ENCODE measurements at regions of chr12 and their contacts with region 1.

Region 1: GRCh38 chr12:2691006-2691344 is 103.8 kb upstream of the FKBP4 start:
- DNase-seq: peak; percentile 43 to 79 (median 64)
- H3K4me3 ChIP-seq: peak overlapping the region; percentile 63
- H3K4me3 Mint-ChIP-seq: peak overlapping the region; percentile 89 to 98 (median 94)
- H3K27ac ChIP-seq: peak overlapping the region; percentile 65
- H3K27ac Mint-ChIP-seq: peak overlapping the region; percentile 86 to 99 (median 94)
- H3K4me1 ChIP-seq: peaks cover 26% of the 10 kb centered on the region
- H3K4me1 Mint-ChIP-seq: peaks cover 42 to 55% (median 52%) of the 10 kb centered on the region in 3 donors
- H3K27me3 ChIP-seq: no peaks in the 10 kb centered on the region
- H3K27me3 Mint-ChIP-seq: peaks cover 7 to 10% of the 10 kb centered on the region in 2 donors

Region 2: GRCh38 chr12:2719392-2719791 is 28.4 kb after region 1 on chr12:
- CTCF ChIA-PET with region 1: no interaction called
- POLR2A ChIA-PET with region 1: no interaction called
- DNase-seq: no peak
- H3K4me3 ChIP-seq: no peak overlapping the region
- H3K4me3 Mint-ChIP-seq: no peak overlapping the region
- H3K27ac ChIP-seq: no peak overlapping the region
- H3K27ac Mint-ChIP-seq: no peak overlapping the region
- H3K4me1 ChIP-seq: no peaks in the 10 kb centered on the region
- H3K4me1 Mint-ChIP-seq: no peaks in the 10 kb centered on the region
- H3K27me3 ChIP-seq: no peaks in the 10 kb centered on the region
- H3K27me3 Mint-ChIP-seq: peaks cover 7 to 35% of the 10 kb centered on the region in 2 donors

Region 3: DNA sequence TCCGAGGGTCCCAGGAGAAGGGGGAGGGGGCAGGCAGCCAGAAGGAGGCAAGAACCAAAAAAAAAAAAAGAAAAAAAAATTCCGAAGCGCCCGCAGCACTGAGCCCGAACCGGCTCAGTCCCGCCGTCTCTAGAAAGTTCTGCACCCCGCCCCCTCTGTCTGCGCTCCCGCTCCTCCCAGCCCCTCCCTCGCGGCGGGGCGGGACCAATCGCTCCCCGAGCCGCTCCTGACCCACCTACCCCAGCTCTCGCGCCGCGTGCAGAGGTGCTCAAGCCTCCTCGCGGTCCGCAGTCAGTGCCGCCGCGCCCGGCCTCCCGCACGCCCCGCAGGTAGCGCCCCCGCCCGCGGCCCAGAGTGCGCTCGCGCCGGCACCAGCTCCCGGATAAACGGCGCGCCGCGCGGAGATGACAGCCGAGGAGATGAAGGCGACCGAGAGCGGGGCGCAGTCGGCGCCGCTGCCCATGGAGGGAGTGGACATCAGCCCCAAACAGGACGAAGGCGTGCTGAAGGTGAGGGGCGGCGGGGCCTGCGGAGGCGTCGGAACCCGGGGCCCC is 103.8 kb after region 1 on chr12 and contains the start of gene FKBP4:
- CTCF ChIA-PET with region 1: interaction called, 4 read pairs
- POLR2A ChIA-PET with region 1: interaction called, 18 read pairs
- DNase-seq: peak; percentile 84 to 91 (median 86)
- H3K4me3 ChIP-seq: peak within 1 kb of the TSS; percentile 66
- H3K4me3 Mint-ChIP-seq: peak within 1 kb of the TSS; percentile 89 to 99 (median 91)
- H3K27ac ChIP-seq: peak within 1 kb of the TSS; percentile 18
- H3K27ac Mint-ChIP-seq: peak within 1 kb of the TSS; percentile 66 to 92 (median 78)
- H3K4me1 ChIP-seq: peaks cover 21% of the 10 kb centered on the region
- H3K4me1 Mint-ChIP-seq: peaks cover 14 to 24% (median 21%) of the 10 kb centered on the region in 3 donors
- H3K27me3 ChIP-seq: no peaks in the 10 kb centered on the region
- H3K27me3 Mint-ChIP-seq: no peaks in the 10 kb centered on the region
- total RNA-seq, gene FKBP4: 172 to 183 TPM